GM18951 (cell line): ENCODE measurements at regions of chr2 and their contacts with region 1.

Region 1: DNA sequence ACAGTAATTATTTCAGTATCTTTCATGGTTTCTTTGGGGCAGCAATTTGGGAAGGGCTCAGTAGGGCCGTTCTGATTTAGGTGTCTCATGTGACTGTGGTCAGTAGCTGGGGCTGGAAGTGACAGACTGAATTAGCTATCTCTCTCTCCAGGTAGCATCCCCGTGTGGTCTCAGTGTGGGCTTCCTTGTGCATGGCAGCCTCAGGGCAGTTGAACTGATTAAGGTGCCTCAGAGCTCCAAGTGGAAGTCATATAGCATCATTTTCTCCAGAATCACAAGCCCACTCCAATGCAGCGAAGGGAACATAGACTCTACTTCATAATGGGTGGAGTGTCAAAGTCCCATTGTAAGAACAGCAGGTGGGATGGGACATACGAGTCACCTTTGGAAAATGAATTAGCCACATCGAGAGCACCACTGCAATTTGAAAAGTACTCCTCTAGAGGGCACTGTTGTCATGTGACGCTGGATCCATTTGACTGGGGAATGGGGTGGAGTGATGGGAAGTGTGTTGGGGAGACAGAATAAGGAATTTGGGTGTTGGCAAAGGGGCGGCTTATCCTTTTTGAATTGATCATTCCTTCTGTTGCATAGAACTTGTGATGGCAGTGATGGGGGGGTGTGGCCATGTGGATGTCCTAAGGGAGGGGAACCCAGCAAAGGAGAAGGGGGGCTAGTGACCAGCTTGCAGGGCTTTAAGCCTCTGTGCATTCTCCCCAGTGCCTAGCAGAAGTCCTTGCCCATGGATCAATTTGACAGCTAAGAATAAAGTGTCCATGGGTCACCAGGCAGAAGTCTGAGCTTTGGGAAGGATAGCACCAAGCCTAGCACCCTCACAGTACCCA is 39.3 kb upstream of the FAM136A start:
- POLR2A ChIP-seq: no peak

Region 2: DNA sequence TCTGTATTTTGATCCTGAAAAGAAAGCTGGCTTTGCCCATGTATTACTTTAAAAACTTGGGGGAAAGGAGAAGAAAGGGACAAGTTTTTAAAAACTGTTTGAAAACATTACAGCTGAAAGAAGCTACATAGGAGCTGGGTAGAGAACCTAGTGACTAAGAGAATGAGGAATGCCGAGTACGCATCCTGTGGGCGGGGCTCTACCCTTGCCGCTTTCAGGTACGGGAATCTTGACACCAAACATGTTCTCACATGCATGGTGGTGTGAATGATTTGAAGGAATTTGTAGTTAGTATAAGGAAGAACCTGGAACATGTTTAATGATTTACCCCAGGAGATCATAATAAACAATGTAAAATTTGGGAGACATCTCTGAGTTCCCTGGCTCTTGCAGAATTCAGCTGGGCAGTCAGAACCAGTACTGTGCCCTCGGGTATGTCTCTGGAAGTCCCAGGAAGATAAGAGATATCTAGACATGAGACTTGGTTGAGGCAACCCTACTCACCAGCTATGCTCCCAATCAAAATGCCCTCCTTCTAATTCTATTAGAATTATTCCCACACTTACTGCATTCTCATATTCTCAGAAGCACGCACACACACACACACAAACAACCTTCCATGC is 229.0 kb after region 1 on chr2:
- in situ Hi-C with region 1: no loop called
- POLR2A ChIP-seq: no peak

Region 3: GRCh38 chr2:70616168-70616694 is 275.1 kb after region 1 on chr2:
- in situ Hi-C with region 1: loop called (anchors 10 kb)
- POLR2A ChIP-seq: no peak